ENCODE measurements at regions of chr5 and their contacts with region 1.

Region 1: DNA sequence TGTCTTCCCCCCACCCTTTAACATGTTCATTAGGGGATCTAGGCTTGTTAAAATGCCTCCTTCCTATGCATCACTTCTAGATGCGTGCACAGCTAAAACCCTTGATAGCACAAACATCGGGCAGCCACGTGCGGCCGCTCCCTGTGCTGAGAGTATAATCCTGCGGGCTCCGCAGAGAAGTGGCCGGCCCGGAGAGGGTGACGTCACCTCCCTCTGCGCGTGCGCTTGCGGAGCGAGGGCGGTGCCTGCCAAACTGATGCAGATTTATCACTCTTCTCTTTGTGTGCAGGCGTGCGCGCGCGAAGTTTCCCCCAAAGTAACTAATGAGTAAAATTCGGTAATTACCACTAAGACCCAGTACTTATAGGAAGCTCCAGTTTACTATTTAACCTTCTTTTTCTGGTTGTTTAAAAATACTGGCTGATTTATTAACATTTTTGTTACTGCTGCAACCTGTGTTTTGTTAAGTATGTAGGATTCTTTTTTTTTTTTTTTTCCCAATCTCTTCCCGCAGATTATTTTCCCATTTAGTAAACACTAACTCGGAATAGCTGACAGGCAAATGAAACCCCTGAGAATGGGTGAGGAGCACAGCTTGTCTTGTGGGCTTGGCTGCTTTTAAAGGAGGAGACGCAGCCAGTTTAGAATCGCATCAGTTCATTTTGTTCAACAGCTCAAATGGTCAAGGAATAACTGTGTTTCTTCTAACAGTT is 121.6 kb downstream of the TRIO start:
- DNase-seq: peak; percentile 21 to 82 (median 60)
- ATAC-seq: peak; percentile 98
- H3K4me3 ChIP-seq: peak overlapping the region; percentile 23
- H3K4me3 Mint-ChIP-seq: peak overlapping the region; percentile 76
- H3K27ac ChIP-seq: no peak overlapping the region
- H3K27ac Mint-ChIP-seq: no peak overlapping the region
- H3K4me1 ChIP-seq: peaks cover 5% of the 10 kb centered on the region
- H3K4me1 Mint-ChIP-seq: peaks cover 6% of the 10 kb centered on the region
- H3K27me3 ChIP-seq: peaks cover 0 to 18% of the 10 kb centered on the region in 2 experiments
- H3K27me3 Mint-ChIP-seq: peaks cover 21% of the 10 kb centered on the region
- CTCF ChIP-seq: no peak

Region 2: GRCh38 chr5:13994621-13995253 is 270.0 kb before region 1 on chr5:
- CTCF ChIA-PET with region 1: no interaction called
- POLR2A ChIA-PET with region 1: no interaction called
- intact Hi-C with region 1: loop called in 1 of 2 experiments (anchors 10 kb)
- DNase-seq: no peak
- ATAC-seq: no peak
- H3K4me3 ChIP-seq: no peak overlapping the region
- H3K4me3 Mint-ChIP-seq: no peak overlapping the region
- H3K27ac ChIP-seq: no peak overlapping the region
- H3K27ac Mint-ChIP-seq: no peak overlapping the region
- H3K4me1 ChIP-seq: no peaks in the 10 kb centered on the region
- H3K4me1 Mint-ChIP-seq: no peaks in the 10 kb centered on the region
- H3K27me3 ChIP-seq: no peaks in the 10 kb centered on the region
- H3K27me3 Mint-ChIP-seq: peaks cover 8% of the 10 kb centered on the region
- CTCF ChIP-seq: no peak

Region 3: DNA sequence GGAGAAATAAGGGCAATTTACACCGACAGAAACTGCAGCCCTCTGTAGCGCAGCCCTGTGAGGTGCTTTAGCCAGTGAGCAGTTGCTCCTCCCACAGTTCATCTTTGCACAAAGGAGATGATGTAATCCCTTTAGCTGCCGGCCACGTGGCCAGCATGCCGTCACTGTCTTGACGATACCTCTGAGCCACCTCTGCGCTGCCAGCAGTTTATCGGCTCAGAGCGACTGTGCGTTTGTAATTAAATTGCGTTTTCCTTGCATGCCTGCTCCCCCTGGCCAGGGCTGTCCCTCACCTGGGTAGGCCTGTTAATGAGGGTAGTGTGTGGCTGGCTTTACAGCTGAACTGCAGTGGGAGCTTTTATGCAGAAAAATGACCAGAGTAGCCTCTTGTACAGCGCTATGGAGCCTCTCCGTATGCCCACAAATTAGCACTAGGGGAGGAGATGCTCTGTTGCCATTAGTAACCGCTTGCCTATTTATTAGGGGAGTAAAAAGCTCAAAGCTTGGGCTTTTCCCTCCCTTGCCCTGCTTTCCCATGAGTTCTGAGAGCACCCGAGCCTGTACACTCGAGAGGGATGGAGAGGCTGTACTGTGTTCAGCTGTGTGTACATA is 14.6 kb before region 1 on chr5:
- CTCF ChIA-PET with region 1: no interaction called
- POLR2A ChIA-PET with region 1: no interaction called
- intact Hi-C with region 1: no loop called
- DNase-seq: peak in 2 of 14 experiments; percentile 12 to 28
- ATAC-seq: no peak
- H3K4me3 ChIP-seq: no peak overlapping the region
- H3K4me3 Mint-ChIP-seq: no peak overlapping the region
- H3K27ac ChIP-seq: no peak overlapping the region
- H3K27ac Mint-ChIP-seq: no peak overlapping the region
- H3K4me1 ChIP-seq: no peaks in the 10 kb centered on the region
- H3K4me1 Mint-ChIP-seq: no peaks in the 10 kb centered on the region
- H3K27me3 ChIP-seq: peaks cover 0 to 3% of the 10 kb centered on the region in 2 experiments
- H3K27me3 Mint-ChIP-seq: no peaks in the 10 kb centered on the region
- CTCF ChIP-seq: no peak